Activated CD4-positive, alpha-beta T cell treated with anti-CD3 and anti-CD28 coated beads for 36 hours (primary cell): ENCODE measurements at regions of chr1 and their contacts with region 1.

Region 1: DNA sequence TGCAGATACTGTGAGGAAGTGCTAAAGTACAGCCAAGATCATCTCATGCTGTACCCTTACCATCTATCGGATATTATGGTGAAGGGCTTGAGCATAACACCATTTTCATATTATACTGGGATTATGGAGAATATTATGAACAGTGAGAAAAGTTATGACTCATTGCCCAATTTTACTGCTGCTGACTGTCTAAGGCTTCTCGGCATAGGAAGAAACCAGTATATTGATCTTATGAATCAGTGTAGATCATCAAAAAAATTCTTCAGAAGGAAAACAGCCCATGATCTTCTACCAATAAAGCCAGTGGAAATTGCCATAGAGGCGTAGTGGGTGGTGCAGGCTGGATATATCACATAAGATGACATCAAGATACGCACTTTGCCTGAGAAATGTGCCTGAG is 47.7 kb downstream of the PPIAL4G start:
- DNase-seq: no peak
- ATAC-seq: no peak
- H3K4me3 Mint-ChIP-seq: no peak overlapping the region
- H3K27ac Mint-ChIP-seq: no peak overlapping the region
- H3K4me1 Mint-ChIP-seq: peaks cover 59% of the 10 kb centered on the region
- H3K27me3 Mint-ChIP-seq: no peaks in the 10 kb centered on the region

Region 2: GRCh38 chr1:147748676-147749350 is 686.6 kb before region 1 on chr1:
- CTCF ChIA-PET with region 1: no interaction called
- POLR2A ChIA-PET with region 1: no interaction called
- intact Hi-C with region 1: no loop called
- DNase-seq: no peak
- ATAC-seq: no peak
- H3K4me3 Mint-ChIP-seq: no peak overlapping the region
- H3K27ac Mint-ChIP-seq: no peak overlapping the region
- H3K4me1 Mint-ChIP-seq: no peaks in the 10 kb centered on the region
- H3K27me3 Mint-ChIP-seq: no peaks in the 10 kb centered on the region

Region 3: DNA sequence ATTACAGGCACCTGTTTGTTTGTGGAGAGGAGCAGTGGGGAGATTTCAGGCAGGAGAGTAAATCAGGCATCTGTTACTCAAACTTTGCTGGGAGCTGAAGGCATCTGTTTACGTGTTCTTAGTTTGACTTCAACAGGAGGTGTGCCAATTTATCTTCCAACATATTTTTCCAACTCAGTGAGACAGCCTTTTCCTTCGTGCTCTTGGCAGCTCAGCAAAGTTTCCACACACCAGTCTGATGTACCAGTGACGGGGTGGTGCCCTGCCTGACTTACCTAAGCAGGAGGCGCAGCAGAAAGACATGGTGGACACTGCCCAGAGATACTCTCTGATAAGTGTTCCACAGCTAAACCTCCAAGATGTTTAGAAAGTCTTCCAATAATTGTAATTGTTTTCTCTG is 129.1 kb before region 1 on chr1:
- CTCF ChIA-PET with region 1: no interaction called
- POLR2A ChIA-PET with region 1: no interaction called
- intact Hi-C with region 1: no loop called
- DNase-seq: no peak
- ATAC-seq: no peak
- H3K4me3 Mint-ChIP-seq: no peak overlapping the region
- H3K27ac Mint-ChIP-seq: no peak overlapping the region
- H3K4me1 Mint-ChIP-seq: peaks cover 18% of the 10 kb centered on the region
- H3K27me3 Mint-ChIP-seq: peaks cover 41% of the 10 kb centered on the region

Region 4: DNA sequence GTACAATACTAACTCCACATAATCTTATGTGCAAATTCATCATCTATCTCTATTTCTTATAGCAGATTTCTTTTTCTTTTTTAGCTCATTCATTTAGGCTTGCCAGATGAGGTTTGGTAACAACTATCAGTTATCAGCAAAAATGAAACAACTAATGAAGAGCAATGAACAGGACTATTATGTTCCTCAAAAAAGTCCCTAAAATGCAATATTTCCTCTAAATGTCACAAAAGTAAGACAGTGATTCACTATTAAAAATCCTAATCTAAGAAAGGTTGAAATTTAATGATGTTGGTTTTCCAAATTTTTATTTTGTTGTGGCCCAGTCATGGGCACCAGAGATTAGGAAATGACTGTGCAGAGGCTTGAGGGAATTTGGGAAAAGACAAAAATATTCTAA is 87.6 kb before region 1 on chr1:
- CTCF ChIA-PET with region 1: no interaction called
- POLR2A ChIA-PET with region 1: no interaction called
- intact Hi-C with region 1: no loop called
- DNase-seq: no peak
- ATAC-seq: no peak
- H3K4me3 Mint-ChIP-seq: no peak overlapping the region
- H3K27ac Mint-ChIP-seq: no peak overlapping the region
- H3K4me1 Mint-ChIP-seq: peaks cover 2% of the 10 kb centered on the region
- H3K27me3 Mint-ChIP-seq: peaks cover 14% of the 10 kb centered on the region

Region 5: DNA sequence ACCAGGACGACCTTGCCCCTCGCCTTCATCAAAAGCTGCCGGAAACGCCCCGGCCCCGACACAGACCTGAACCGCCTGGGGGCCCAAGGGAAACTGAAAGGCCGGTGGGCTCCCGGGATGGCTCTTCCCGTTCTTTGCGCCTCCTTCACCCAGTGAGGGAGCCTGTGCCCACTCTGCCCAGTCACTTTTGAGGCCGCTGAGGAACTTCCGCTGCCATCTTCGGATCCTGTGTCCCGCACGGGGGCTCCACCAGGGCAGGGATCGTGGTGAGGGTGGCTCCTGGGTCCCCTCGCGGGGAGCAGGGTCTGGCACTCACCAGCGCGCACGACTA is 56.3 kb before region 1 on chr1:
- CTCF ChIA-PET with region 1: no interaction called
- POLR2A ChIA-PET with region 1: no interaction called
- intact Hi-C with region 1: loop called in 1 of 2 experiments (anchors 2 kb)
- DNase-seq: no peak
- ATAC-seq: no peak
- H3K4me3 Mint-ChIP-seq: peak overlapping the region; percentile 8
- H3K27ac Mint-ChIP-seq: no peak overlapping the region
- H3K4me1 Mint-ChIP-seq: peaks cover 15% of the 10 kb centered on the region
- H3K27me3 Mint-ChIP-seq: no peaks in the 10 kb centered on the region